ENCODE measurements at regions of chr18 and their contacts with region 1.

Region 1: DNA sequence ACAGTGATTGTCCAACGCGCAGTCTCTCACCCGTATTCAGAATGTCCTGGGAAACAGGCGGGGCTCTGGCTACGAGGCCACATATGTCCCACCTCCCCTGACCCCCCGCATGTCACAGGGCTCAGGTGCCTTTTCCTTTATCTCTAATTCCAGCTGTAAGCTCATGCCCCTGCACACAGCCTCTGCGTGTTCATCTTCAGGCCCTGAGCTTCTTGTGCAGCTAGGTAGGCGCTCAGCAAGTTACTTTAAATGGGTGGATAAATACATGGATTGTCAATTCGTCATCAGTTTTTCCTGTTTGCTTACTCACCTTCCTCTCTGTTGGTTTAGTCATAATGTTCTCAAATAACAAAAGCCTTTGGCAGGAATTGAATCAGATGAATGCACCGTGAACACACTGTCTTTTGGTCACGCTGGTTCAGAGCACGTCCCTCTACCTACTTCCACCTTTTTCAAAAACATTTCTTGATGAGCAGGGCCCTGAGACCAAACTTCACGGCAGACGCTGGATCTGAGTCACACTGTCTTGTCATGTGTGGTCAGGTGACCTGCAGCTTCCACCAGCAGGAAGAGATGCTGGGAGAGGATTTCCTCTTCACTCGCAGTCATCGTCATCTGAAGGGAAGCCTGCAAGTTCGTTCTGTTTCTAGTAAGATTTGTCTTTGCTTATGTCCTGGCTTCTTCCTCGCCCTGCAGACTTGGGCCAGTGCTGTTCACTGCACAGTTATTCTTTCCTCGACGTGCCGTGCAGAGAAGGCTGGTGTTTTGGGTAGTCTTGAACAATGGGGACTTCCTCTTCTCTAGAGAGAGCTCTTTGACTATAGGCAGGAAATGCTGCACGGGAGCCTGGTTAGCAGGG is 138.1 kb downstream of the PTGR3 start:
- DNase-seq: no peak
- ATAC-seq: peak; percentile 22 to 82 (median 66)
- H3K4me3 ChIP-seq: peak overlapping the region in 8 of 10 donors; percentile 8 to 47 (median 27)
- H3K27ac ChIP-seq: peak overlapping the region in 9 of 10 donors; percentile 58 to 90 (median 79)
- H3K4me1 ChIP-seq: peaks cover 0 to 32% (median 9%) of the 10 kb centered on the region in 9 donors
- H3K27me3 ChIP-seq: no peaks in the 10 kb centered on the region
- CTCF ChIP-seq: no peak

Region 2: GRCh38 chr18:74506425-74507119 is 564.3 kb before region 1 on chr18:
- intact Hi-C with region 1: loop called in 1 of 10 experiments (anchors 5 kb)
- DNase-seq: no peak
- ATAC-seq: peak in 3 of 8 donors; percentile 19 to 34 (median 32)
- H3K4me3 ChIP-seq: no peak overlapping the region
- H3K27ac ChIP-seq: peak overlapping the region in 3 of 10 donors; percentile 12 to 31 (median 30)
- H3K4me1 ChIP-seq: peaks cover 0 to 17% (median 6%) of the 10 kb centered on the region in 9 donors
- H3K27me3 ChIP-seq: no peaks in the 10 kb centered on the region
- CTCF ChIP-seq: no peak

Region 3: GRCh38 chr18:74942319-74942910 is 128.4 kb before region 1 on chr18:
- intact Hi-C with region 1: no loop called
- DNase-seq: no peak
- ATAC-seq: no peak
- H3K4me3 ChIP-seq: no peak overlapping the region
- H3K27ac ChIP-seq: no peak overlapping the region
- H3K4me1 ChIP-seq: no peaks in the 10 kb centered on the region
- H3K27me3 ChIP-seq: no peaks in the 10 kb centered on the region
- CTCF ChIP-seq: no peak

Region 4: DNA sequence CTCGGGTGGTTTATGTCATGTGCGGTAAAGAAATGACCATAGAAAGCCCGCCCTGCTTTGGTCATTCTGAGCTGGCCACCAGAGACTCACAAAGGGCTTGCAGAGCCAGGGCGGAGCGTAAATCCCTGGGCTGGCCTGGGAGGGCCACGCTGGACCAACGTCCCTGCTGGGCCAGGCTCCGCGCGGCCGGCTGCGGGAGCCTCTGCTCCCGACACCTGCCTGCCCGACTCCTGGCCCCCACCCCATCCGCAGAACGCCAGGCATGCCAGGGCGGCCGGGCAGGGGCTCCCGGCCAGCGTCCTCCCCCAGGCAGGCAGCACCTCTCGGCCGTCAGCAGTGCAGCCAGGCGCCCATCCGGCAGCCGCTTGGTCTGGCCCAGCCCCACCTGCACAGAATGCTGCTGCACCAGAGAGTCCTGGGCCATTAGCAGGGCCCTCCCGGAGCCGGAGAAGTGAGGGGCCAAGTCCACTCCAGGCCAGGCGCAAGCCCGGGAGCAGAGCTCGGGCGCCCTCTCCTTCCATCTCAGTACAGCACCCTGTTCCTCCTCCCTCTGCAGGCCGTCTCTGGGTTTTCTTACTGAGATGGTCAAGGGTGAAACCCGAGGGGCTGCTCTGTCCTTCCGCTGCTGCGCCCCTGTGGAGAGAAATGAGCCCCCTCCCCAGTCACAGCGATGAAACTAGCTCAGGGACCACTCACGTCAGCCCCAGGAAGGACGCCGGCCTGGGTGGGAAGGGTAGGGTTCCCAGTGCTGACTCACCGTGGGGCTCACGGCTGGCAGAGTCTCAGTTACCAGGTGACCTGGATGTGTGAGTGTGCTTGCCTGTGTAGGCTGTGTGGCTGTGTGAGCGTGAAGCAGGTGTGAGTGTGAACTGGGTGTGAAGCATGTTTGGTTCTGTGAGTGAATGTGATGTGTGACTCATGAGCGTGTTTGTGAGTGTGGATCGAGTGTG is 54.8 kb after region 1 on chr18:
- intact Hi-C with region 1: no loop called
- DNase-seq: no peak
- ATAC-seq: peak in 7 of 8 donors; percentile 22 to 63 (median 44)
- H3K4me3 ChIP-seq: peak overlapping the region in 5 of 10 donors; percentile 19 to 42 (median 34)
- H3K27ac ChIP-seq: no peak overlapping the region
- H3K4me1 ChIP-seq: no peaks in the 10 kb centered on the region
- H3K27me3 ChIP-seq: peaks cover 0 to 8% (median 0%) of the 10 kb centered on the region in 7 donors
- CTCF ChIP-seq: peak in 1 of 9 donors; percentile 12

Region 5: GRCh38 chr18:75161256-75162028 is 90.6 kb after region 1 on chr18:
- intact Hi-C with region 1: loop called in 4 of 10 experiments (anchors 5 to 10 kb)
- DNase-seq: peak in 1 of 2 donors; percentile 28
- ATAC-seq: peak; percentile 32 to 86 (median 72)
- H3K4me3 ChIP-seq: peak overlapping the region in 9 of 10 donors; percentile 24 to 62 (median 49)
- H3K27ac ChIP-seq: peak overlapping the region in 6 of 10 donors; percentile 20 to 50 (median 40)
- H3K4me1 ChIP-seq: peaks cover 0 to 16% (median 5%) of the 10 kb centered on the region in 9 donors
- H3K27me3 ChIP-seq: no peaks in the 10 kb centered on the region
- CTCF ChIP-seq: peak in 5 of 9 donors; percentile 4 to 30 (median 11)

Region 6: DNA sequence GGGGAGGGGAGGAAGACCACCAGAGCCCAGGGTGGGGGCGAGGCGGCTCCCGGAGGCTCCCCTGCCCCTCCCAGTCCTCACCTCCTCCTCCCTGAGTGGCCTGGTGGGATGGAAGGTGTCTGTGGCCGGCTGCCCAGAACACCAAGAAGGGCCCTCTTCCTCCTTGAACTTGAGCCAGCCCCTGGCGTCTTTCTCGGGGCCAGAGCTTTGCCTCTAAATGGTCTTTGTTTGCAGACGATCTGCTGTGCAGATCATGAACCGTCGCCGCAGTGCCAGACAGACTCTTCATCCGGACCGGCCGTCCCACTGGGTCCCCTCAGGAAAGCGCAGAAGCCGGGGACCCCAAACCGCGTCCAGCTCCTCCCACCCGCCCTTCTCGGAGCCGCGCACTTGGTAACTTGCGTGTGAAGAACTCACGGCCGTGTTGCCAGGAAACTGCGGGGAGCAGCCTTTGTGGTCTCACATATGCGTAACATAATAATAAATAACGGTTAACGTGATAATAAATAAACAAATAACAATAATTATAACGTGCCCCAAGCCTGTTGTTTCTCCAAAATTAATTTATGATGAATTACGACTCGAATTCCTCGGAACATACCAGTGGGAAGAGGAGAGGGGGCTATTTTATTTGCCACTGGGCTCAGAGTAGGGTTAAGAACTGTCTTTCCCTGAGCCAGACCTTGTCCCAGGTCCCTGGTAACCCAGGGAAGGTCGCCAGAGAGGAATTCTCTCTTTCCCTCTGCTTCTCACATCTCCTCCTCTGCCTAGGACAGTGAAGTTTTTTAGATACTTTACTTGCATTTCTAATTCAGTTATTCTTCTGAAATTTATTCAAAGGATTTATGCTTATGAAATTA is 97.1 kb after region 1 on chr18:
- intact Hi-C with region 1: loop called in 3 of 10 experiments (anchors 5 to 10 kb)
- DNase-seq: peak in 1 of 2 donors; percentile 61
- ATAC-seq: peak in 6 of 8 donors; percentile 18 to 64 (median 37)
- H3K4me3 ChIP-seq: peak overlapping the region in 9 of 10 donors; percentile 2 to 41 (median 34)
- H3K27ac ChIP-seq: peak overlapping the region; percentile 13 to 93 (median 56)
- H3K4me1 ChIP-seq: peaks cover 5 to 51% (median 17%) of the 10 kb centered on the region in 9 donors
- H3K27me3 ChIP-seq: no peaks in the 10 kb centered on the region
- CTCF ChIP-seq: no peak

Measured in heart right ventricle (tissue), 16 donors.